ENCODE measurements at regions of chr10 and their contacts with region 1.

Region 1: GRCh38 chr10:88932539-88933256 is 19.9 kb downstream of the ACTA2 start:
- H3K4me3 Mint-ChIP-seq: no peak overlapping the region
- H3K27ac Mint-ChIP-seq: no peak overlapping the region
- H3K4me1 Mint-ChIP-seq: peaks cover 18% of the 10 kb centered on the region
- H3K27me3 Mint-ChIP-seq: peaks cover 9% of the 10 kb centered on the region

Region 2: DNA sequence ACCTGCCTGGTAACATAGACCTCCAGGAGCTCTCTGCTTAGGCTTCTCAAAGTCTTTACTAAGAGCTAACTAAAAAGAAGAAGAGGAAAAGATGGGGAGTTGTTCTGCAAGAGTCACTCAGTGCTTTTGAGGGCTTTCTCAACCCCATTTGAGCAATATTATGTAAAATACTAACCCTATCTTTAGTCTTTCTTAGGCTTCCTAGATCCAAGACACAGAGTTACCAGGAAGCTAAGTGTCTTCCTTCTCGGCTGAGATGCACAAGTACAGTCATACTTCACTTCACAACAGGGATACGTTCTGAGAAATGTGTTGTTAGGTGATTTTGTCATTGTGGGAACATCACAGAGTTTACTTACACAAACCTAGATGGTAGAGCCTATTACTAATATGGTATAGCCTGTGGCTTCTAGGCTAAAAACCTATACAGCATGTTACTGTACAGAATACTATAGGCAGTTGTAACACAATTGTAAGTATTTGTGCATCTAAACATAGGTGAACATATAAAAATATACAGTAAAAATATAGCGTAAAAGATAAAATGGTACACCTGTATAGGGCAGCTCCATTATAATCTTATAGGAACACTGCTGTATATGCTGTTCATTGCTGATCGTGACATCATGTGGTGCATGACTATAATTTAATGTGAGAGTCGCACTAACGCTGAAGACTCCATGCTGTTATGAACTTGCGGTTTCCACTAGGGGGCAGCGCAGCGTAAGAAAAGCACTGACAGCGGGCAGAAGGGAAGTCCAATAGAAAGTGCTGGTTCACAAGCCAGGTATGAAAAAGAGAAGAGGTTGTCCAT is 97.4 kb before region 1 on chr10:
- intact Hi-C with region 1: loop called (anchors 1 kb)
- H3K4me3 Mint-ChIP-seq: no peak overlapping the region
- H3K27ac Mint-ChIP-seq: no peak overlapping the region
- H3K4me1 Mint-ChIP-seq: peaks cover 14% of the 10 kb centered on the region
- H3K27me3 Mint-ChIP-seq: no peaks in the 10 kb centered on the region

Region 3: GRCh38 chr10:88880282-88881076 is 52.2 kb before region 1 on chr10:
- intact Hi-C with region 1: loop called (anchors 1 kb)
- H3K4me3 Mint-ChIP-seq: peak overlapping the region; percentile 97
- H3K27ac Mint-ChIP-seq: peak overlapping the region; percentile 93
- H3K4me1 Mint-ChIP-seq: peaks cover 29% of the 10 kb centered on the region
- H3K27me3 Mint-ChIP-seq: no peaks in the 10 kb centered on the region

Region 4: GRCh38 chr10:88901206-88901983 is 31.3 kb before region 1 on chr10:
- intact Hi-C with region 1: loop called (anchors 2 kb)
- H3K4me3 Mint-ChIP-seq: no peak overlapping the region
- H3K27ac Mint-ChIP-seq: peak overlapping the region; percentile 92
- H3K4me1 Mint-ChIP-seq: peaks cover 40% of the 10 kb centered on the region
- H3K27me3 Mint-ChIP-seq: no peaks in the 10 kb centered on the region

Region 5: DNA sequence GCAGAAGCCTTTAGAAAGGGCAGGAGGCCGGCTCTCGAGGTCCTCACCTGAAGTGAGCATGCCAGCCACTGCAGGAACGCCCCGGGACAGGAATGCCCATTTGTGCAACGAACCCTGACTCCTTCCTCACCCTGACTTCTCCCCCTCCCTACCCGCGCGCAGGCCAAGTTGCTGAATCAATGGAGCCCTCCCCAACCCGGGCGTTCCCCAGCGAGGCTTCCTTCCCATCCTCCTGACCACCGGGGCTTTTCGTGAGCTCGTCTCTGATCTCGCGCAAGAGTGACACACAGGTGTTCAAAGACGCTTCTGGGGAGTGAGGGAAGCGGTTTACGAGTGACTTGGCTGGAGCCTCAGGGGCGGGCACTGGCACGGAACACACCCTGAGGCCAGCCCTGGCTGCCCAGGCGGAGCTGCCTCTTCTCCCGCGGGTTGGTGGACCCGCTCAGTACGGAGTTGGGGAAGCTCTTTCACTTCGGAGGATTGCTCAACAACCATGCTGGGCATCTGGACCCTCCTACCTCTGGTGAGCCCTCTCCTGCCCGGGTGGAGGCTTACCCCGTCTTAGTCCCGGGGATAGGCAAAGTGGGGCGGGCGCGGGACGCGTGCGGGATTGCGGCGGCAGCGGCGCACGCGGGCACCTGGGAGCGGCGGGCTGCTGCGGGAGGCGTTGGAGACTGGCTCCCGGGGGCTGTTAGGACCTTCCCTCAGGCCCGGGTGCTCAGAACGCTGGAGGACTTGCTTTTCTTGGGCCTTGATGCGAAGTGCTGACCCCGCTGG is 57.9 kb after region 1 on chr10 and contains the start of gene FAS:
- intact Hi-C with region 1: loop called (anchors 1 kb)
- H3K4me3 Mint-ChIP-seq: peak within 1 kb of the TSS; percentile 99
- H3K27ac Mint-ChIP-seq: peak within 1 kb of the TSS; percentile 95
- H3K4me1 Mint-ChIP-seq: peaks cover 32% of the 10 kb centered on the region
- H3K27me3 Mint-ChIP-seq: peaks cover 2% of the 10 kb centered on the region

Region 6: DNA sequence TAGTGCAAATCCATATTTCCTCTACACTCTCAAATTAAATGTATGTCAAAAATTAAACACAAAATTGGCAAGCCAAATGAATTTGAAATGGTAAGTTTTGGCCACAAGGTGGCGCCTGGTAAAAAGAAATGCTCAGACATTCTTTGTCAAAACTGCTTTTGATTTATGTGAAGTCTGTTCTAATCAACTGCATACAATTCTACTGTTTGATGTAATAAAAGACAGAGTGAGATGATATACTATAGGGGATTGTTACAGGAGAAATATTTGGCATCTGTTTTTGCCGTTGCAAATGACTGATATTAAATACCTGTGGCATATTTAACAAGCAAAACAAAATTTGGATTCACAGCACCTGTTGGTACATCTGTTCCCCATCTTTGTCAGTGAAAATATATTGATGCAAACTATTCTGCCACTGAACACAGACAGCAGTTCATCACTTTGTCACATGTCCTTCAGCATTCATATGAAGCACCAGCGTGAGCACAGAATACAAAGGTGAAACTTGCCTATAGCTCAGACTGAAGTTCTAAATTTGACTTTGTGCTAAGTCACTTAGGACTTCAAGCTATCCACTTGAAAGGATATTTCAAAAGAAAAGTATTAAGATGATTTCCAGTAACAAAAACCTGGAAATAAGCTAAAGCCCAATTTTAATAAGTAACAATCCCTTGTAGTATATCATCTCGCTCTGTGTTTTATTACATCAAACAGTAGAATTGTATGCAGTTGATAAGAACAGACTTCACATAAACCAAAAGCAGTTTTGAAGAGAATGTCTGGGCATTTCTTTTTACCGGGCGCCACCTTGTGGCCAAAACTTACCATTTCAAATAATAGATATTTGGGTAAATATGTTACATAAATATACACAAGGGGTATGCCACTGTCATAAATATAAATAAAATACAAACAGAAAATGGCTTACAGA is 284.6 kb after region 1 on chr10:
- intact Hi-C with region 1: loop called (anchors 1 kb)
- H3K4me3 Mint-ChIP-seq: no peak overlapping the region
- H3K27ac Mint-ChIP-seq: no peak overlapping the region
- H3K4me1 Mint-ChIP-seq: peaks cover 25% of the 10 kb centered on the region
- H3K27me3 Mint-ChIP-seq: peaks cover 1% of the 10 kb centered on the region